ENCODE measurements at regions of chr14 and their contacts with region 1.

Region 1: DNA sequence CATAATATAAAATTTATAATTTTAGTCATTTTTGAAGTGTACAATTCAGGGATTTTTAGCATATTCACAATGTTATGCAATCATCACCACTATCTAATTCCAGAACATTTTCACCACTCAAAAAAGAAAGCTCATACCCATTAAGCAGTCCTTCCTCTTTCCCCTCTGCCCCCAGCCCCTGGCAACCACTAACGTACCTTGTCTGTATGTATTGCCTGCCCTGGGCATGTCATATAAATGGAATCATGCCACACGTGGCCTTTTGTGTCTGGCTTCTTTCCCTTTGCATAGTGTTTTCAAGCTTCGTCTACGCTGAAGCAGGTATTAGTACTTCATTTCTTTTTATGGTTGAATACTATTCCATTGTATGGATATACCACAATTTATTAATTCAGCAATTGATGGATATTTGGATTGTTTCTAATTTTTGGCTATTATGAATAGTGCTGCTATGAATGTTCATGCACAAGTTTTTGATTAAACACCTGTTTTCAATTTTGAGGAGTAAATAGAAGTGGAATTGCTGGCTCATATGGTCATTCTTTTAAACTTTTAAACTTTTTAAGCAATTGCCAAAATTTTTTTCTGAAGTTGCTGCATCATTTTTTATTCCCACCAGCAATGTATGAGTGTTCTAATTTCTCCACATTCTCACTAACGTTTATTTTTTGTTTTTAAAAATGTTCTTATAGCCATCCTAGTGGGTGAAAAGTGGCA is 1.6 kb upstream of the SSTR1 start:
- DNase-seq: no peak
- ATAC-seq: no peak
- H3K4me3 ChIP-seq: no peak overlapping the region
- H3K27ac ChIP-seq: no peak overlapping the region
- H3K4me1 ChIP-seq: no peaks in the 10 kb centered on the region
- H3K27me3 ChIP-seq: no peaks in the 10 kb centered on the region
- CTCF ChIP-seq: no peak
- POLR2A ChIP-seq: no peak
- RAD21 ChIP-seq: no peak

Region 2: GRCh38 chr14:38238332-38238731 is 32.2 kb after region 1 on chr14:
- CTCF ChIA-PET with region 1: no interaction called
- POLR2A ChIA-PET with region 1: no interaction called
- RAD21 ChIA-PET with region 1: no interaction called
- intact Hi-C with region 1: loop called (anchors 1 kb)
- DNase-seq: no peak
- ATAC-seq: no peak
- H3K4me3 ChIP-seq: no peak overlapping the region
- H3K27ac ChIP-seq: no peak overlapping the region
- H3K4me1 ChIP-seq: no peaks in the 10 kb centered on the region
- H3K27me3 ChIP-seq: no peaks in the 10 kb centered on the region
- CTCF ChIP-seq: no peak
- POLR2A ChIP-seq: no peak
- RAD21 ChIP-seq: no peak

Region 3: DNA sequence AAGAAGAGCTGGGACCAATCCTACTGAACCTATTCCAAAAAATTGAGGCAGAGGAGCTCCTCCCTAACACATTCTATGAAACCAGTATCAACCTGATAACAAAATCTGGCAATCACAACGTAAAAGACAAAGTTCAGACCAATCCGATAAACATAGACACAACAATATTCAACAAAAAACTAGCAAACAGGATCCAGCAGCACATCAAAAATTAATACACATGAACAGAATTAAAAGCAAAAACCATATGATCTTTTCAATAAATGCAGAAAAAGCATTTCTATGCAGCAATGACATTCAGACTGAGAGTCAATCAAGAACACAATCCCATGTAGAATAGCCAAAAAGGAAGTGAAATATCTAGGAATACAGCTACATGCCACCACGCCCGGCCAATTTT is 56.7 kb after region 1 on chr14:
- CTCF ChIA-PET with region 1: no interaction called
- POLR2A ChIA-PET with region 1: no interaction called
- RAD21 ChIA-PET with region 1: no interaction called
- intact Hi-C with region 1: no loop called
- DNase-seq: no peak
- ATAC-seq: no peak
- H3K4me3 ChIP-seq: no peak overlapping the region
- H3K27ac ChIP-seq: no peak overlapping the region
- H3K4me1 ChIP-seq: no peaks in the 10 kb centered on the region
- H3K27me3 ChIP-seq: no peaks in the 10 kb centered on the region
- CTCF ChIP-seq: no peak
- POLR2A ChIP-seq: no peak
- RAD21 ChIP-seq: no peak